ENCODE measurements at regions of chr3 and their contacts with region 1.

Region 1: GRCh38 chr3:58177747-58178527 is 32.8 kb downstream of the DNASE1L3 start:
- DNase-seq: peak; percentile 95

Region 2: DNA sequence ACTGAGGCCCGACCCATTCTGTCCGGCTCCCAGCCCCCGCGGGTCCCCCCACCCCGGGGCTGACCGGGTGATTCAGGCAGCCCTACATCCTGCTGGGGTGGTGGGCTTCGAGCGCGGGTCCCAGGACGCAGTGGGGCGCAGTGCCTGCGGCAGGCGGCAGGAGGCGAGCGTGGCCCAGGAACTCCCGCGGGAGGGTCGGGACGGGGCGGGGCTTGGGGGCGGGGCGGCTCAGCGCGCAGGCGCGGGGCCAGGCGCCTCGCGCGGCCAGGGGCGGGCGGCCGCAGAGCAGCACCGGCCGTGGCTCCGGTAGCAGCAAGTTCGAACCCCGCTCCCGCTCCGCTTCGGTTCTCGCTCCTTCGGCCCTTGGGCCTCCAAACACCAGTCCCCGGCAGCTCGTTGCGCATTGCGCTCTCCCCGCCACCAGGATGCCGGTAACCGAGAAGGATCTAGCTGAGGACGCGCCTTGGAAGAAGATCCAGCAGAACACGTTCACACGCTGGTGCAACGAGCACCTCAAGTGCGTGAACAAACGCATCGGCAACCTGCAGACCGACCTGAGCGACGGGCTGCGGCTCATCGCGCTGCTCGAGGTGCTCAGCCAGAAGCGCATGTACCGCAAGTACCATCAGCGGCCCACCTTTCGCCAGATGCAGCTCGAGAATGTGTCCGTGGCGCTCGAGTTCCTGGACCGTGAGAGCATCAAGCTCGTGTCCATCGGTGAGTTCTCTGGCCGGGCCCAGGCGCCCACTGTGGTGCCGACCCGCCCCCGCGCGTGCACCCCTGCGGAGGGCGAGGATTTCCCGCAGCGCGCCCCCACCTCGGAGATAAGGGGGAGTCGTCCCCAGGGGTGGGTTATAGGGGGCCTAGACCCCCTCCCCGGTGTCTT is 169.6 kb before region 1 on chr3 and contains the start of gene FLNB:
- intact Hi-C with region 1: loop called (anchors 2 kb)
- DNase-seq: peak; percentile 87
- total RNA-seq, gene FLNB: 58.1 TPM

Region 3: DNA sequence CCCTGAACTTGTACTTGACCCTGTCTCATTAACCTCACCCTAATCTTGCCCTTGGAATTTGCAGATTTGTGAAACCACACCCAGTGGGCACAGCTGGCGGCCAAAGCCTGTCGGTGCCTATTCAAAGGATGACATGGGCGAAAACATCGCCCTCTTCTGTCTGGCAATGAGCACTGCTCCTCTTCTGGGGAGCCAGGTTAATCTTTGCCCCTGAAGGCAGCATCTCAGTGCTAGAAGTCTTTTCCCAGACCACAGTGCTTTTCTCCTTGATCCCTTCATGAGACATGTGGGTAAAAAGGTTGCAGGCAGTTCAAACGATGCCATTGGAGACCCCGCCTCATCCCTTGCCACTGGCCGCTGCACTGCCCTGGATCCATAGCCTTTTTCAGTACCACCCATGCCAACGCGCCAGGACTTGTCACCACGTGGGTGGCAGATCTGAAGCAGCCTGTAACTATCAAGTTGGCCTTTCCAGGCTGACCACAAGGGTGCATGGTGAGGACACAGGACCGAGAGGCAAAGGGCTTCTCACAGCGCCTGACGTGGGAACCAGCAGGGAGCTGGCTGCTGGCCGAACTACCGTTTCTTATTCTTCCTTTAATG is 39.4 kb after region 1 on chr3:
- intact Hi-C with region 1: loop called (anchors 5 kb)
- DNase-seq: no peak